Posterior vena cava (tissue), 2 donors: ENCODE measurements at regions of chr1 and their contacts with region 1.

Region 1: GRCh38 chr1:153888533-153888932 is 34.2 kb downstream of the GATAD2B start:
- DNase-seq: no peak

Region 2: DNA sequence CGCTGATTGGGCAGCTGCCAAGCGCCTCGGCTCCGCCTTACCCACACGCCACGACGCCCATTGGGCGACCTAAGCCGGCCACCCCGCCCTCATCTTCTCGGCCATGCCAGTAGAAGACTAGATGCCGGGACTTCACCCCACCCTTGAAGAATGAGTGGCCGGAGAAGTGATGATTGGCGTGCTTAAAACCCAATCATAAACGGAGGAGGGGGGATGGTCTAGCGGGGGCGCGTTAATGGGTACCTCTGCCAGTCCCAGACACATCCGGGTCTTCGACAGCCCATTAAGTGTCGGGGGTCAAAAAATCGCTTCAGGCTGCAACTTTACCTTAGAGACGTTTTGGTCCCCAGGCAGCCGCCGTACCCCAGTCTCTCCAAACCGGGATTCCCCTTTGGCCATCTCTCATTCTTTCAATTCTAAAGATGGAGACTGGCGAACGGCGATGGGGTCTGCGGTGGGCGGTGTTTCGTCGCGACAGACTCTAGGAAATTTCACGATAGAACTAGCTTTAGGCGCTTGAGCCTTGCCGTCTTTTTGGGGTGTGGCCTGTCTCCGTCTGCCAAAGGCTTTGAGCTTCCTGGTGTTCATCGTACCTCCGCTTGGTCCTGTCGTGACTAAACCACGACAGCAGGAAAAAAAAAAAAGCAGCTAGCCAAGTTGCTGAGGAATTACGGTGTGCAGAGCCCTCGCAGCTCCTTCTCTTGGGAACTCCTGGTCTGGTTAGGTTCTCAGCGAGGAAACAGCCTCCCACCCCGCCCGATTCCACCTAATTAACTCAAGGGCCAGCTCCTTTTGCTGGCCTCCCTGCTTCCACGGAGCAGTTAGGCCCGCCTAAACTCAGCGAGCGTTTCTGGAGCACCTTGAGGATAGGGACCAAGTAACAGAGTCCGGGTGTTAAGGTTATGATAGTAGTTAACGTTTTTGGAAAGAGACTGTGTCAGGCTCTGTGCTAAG is 34.7 kb after region 1 on chr1 and contains the start of gene GATAD2B:
- intact Hi-C with region 1: loop called in 1 of 2 experiments (anchors 5 kb)
- DNase-seq: peak; percentile 100
- total RNA-seq, gene GATAD2B: 33.5 to 43.5 TPM